Left ventricle myocardium superior (tissue), 1 donor: ENCODE measurements at regions of chr9 and their contacts with region 1.

Region 1: DNA sequence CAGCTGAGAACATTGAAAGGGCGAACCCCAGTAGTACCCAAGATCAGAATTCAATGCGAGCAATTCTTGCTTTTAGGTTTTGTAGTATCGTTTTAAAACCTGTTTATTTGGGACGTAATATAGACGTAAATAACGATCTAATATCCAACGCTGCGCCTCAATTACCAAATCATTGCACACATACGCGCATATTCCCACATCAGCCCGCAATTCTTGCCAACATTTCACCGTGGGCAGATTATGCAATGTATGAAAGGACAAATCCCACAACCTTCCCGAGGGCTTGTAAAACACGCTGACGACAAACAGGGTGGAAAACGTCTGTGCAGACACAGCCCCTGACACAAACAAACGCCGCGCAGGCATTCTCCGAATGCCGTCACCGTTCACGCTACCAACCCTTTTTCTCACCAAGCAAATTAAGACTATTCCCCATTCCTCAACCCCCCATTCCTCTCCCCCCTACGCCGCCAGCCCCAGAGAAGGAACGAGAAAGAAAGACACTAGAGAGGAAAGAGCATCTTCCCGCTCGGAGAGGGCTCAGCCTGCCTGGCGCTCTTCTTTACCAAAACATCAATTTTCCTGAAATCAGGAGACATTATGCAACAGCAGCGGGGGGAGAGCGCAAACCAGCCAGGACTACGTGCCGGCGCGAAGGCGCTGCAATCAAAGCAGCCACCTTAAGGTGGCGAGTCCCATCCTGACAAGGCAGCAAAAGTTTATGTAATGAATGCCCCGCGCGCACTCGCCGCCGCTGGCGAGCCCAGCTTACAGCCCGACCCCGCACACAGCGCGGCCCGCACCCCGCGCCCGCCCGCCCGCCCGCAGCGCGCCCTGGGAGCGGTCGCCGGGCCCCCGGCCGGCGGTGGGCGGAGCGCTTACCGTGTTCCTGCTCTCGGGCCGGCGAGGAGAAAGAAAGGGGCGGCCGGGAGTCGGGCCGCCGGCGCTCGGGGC is 597 bp downstream of the NFIL3 start:
- DNase-seq: peak; percentile 76
- ATAC-seq: peak; percentile 20

Region 2: GRCh38 chr9:91361291-91362050 is 61.6 kb before region 1 on chr9 and contains the start of gene AUH:
- intact Hi-C with region 1: loop called (anchors 5 kb)
- DNase-seq: peak; percentile 93
- ATAC-seq: peak; percentile 99
- total RNA-seq, gene AUH: 44.1 TPM

Region 3: DNA sequence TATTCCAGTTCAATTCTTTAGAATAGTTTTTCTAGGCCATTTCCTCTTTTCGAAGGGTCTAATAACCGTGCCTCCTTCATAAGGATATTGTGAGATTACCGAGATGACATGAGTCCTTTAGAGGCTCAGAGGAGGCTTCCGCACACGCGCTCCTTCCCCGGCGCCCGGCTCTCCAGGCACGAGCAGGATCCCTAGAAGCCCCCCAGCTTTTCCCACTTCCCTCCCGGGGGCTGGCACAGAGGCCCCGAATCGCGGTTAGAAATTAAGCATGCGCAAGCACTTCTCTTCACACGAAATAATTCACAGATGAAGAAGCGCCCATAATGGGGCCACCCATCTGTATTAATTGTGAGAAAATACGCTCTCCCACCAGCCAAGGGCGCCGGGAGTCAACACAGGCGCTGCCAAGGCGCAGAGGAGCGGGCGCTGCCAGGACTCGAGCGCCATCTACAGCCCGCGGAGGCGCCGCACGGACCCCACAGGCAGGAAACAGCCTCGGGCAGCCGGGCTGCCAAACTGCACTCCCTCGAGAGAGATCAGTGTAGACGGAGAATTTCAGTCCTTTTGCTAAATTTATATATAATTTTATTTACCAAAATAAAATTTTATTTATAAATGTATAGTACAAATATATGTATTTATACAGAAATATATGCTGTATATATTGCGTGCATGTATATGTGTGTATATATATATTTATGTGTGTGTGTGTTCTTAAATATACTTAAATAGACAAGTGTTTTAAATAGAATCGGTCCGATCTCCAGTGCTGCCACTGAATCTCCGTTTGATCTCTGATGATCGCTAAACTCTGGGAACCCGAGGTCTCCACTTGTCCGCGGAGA is 258.6 kb after region 1 on chr9:
- intact Hi-C with region 1: no loop called
- DNase-seq: peak; percentile 88
- ATAC-seq: peak; percentile 98